Heart right ventricle (tissue), 16 donors: ENCODE measurements at regions of chr7 and their contacts with region 1.

Region 1: GRCh38 chr7:15015545-15016326 is 113.2 kb upstream of the DGKB start:
- DNase-seq: peak; percentile 8 to 23
- ATAC-seq: peak; percentile 81 to 94 (median 87)
- H3K4me3 ChIP-seq: peak overlapping the region in 7 of 10 donors; percentile 17 to 39 (median 34)
- H3K27ac ChIP-seq: peak overlapping the region in 7 of 10 donors; percentile 1 to 77 (median 54)
- H3K4me1 ChIP-seq: peaks cover 0 to 12% (median 0%) of the 10 kb centered on the region in 9 donors
- H3K27me3 ChIP-seq: no peaks in the 10 kb centered on the region
- CTCF ChIP-seq: peak; percentile 56 to 83 (median 76)

Region 2: GRCh38 chr7:14821757-14822480 is 193.8 kb before region 1 on chr7:
- intact Hi-C with region 1: loop called in 1 of 10 experiments (anchors 10 kb)
- DNase-seq: no peak
- ATAC-seq: no peak
- H3K4me3 ChIP-seq: no peak overlapping the region
- H3K27ac ChIP-seq: no peak overlapping the region
- H3K4me1 ChIP-seq: peaks cover 0 to 4% (median 0%) of the 10 kb centered on the region in 9 donors
- H3K27me3 ChIP-seq: no peaks in the 10 kb centered on the region
- CTCF ChIP-seq: no peak